ENCODE measurements at regions of chr10 and their contacts with region 1.

Region 1: DNA sequence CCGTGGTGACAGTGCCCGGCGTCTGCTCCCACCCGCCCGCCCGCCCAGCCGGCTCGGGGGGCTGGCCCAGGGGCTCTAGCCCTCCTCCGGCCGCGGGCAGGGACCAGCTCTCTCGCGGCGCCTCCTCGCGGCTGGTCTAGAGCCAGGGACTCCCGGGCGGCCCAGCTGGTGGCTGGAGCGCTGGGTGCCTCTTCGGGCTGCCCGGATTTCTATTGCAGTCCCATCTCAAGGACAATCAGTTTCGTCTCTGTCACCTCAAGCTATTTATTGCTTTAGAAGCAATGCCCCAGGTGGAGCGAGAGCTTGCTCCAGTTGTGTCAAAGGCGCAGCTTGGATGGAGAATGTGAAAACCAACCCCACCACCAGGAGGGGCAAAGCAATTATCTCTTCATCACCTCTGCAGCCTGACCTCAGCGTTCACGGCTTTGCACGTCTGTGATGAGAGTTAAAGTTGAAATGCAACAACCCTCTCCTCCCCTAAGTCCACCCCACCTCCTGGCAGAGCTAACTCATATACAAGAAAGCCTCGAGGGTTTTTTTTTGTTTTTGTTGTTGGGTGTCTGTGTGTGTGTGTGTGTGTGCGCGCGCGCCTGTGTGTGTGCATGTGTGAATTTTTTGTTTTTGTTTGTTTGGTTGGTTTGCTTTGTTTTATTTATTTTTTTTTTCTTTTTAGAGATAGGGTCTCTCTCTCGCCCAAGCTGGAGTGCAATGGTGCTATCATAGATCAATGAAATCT is at the start of gene ITGA8:
- DNase-seq: no peak
- H3K4me3 ChIP-seq: peak within 1 kb of the TSS; percentile 30 to 67 (median 40)
- H3K27ac ChIP-seq: no peak within 1 kb of the TSS
- H3K4me1 ChIP-seq: peaks cover 0 to 5% (median 1%) of the 10 kb centered on the region in 4 experiments; a peak in 3 of 7 replicates
- H3K27me3 ChIP-seq: peaks cover 10 to 32% (median 25%) of the 10 kb centered on the region in 4 experiments
- CTCF ChIP-seq: peak; percentile 36 to 72 (median 57)
- EP300 ChIP-seq: no peak
- POLR2A ChIP-seq: no peak
- RAD21 ChIP-seq: peak; percentile 33 to 38; a peak in 2 of 4 replicates
- total RNA-seq, gene ITGA8: not detected in 2 replicates

Region 2: GRCh38 chr10:15433850-15434537 is 286.1 kb before region 1 on chr10:
- CTCF ChIA-PET with region 1: interaction called, 37 read pairs
- POLR2A ChIA-PET with region 1: interaction called, 3 read pairs
- DNase-seq: no peak
- H3K4me3 ChIP-seq: peak overlapping the region in 2 of 4 experiments; percentile 48 to 50; a peak in 3 of 8 replicates
- H3K27ac ChIP-seq: no peak overlapping the region
- H3K4me1 ChIP-seq: no peaks in the 10 kb centered on the region
- H3K27me3 ChIP-seq: peaks cover 0 to 6% (median 3%) of the 10 kb centered on the region in 4 experiments; a peak in 2 of 7 replicates
- CTCF ChIP-seq: peak in 2 of 3 experiments; percentile 42 to 54; a peak in 2 of 4 replicates
- EP300 ChIP-seq: no peak
- POLR2A ChIP-seq: no peak
- RAD21 ChIP-seq: peak; percentile 73 to 75

Region 3: DNA sequence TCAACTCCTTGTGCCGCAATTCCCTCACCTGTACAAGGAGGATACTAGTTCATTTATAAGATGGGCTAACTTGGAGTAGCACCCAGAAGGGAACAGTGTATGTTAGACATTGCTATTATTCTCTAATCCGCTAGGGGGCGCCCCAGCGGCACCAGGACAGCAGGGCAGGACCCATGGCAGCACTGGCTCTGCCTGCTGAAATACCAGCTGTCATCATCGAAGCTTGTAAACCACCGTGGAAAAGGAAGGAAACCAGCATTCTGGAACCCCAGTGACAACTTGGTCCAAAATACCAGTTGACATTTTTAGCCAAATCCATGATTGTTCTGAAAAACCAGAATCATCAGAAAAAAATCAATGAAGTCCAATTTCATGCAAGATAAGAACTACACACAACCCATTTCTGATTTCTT is 134.8 kb before region 1 on chr10:
- CTCF ChIA-PET with region 1: interaction called, 31 read pairs
- POLR2A ChIA-PET with region 1: no interaction called
- DNase-seq: peak; percentile 53 to 84
- H3K4me3 ChIP-seq: no peak overlapping the region
- H3K27ac ChIP-seq: no peak overlapping the region
- H3K4me1 ChIP-seq: no peaks in the 10 kb centered on the region
- H3K27me3 ChIP-seq: no peaks in the 10 kb centered on the region
- CTCF ChIP-seq: peak; percentile 83 to 90 (median 90)
- EP300 ChIP-seq: no peak
- POLR2A ChIP-seq: no peak
- RAD21 ChIP-seq: peak; percentile 81 to 84

Region 4: DNA sequence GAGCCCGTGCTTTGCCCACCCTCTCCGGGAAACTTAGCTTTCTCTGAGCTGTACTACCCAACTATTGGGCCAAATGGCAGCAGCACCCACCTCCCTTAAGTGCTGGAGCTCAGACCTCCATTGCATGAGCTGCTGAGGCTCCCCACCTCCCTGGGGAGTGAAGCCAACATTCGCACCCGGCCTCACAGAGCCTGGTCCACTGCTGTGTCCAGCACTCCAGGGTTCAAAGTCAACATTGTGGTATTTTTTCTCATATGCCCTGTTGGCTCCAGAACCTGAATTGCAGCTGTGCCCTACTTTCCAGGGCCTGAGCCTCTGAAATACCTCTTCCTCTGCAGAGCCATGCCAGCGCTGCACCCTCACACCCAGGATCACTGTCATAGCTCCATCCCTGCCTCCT is 30.0 kb before region 1 on chr10:
- CTCF ChIA-PET with region 1: interaction called, 14 read pairs
- POLR2A ChIA-PET with region 1: no interaction called
- DNase-seq: no peak
- H3K4me3 ChIP-seq: no peak overlapping the region
- H3K27ac ChIP-seq: no peak overlapping the region
- H3K4me1 ChIP-seq: no peaks in the 10 kb centered on the region
- H3K27me3 ChIP-seq: no peaks in the 10 kb centered on the region
- CTCF ChIP-seq: no peak
- EP300 ChIP-seq: no peak
- POLR2A ChIP-seq: no peak
- RAD21 ChIP-seq: no peak

Measured in H1 (cell line).